IMR-90 (cell line): ENCODE measurements at regions of chr2 and their contacts with region 1.

Region 1: GRCh38 chr2:231674587-231675338 is 33.6 kb upstream of the PTMA start:
- DNase-seq: peak; percentile 43
- ATAC-seq: peak; percentile 75
- H3K4me3 ChIP-seq: no peak overlapping the region
- H3K27ac ChIP-seq: no peak overlapping the region
- H3K4me1 ChIP-seq: peaks cover 18% of the 10 kb centered on the region
- H3K27me3 ChIP-seq: no peaks in the 10 kb centered on the region
- CTCF ChIP-seq: peak; percentile 70
- POLR2A ChIP-seq: no peak
- RAD21 ChIP-seq: peak; percentile 66

Region 2: GRCh38 chr2:231563378-231563961 is 111.3 kb before region 1 on chr2:
- CTCF ChIA-PET with region 1: interaction called, 3 read pairs
- POLR2A ChIA-PET with region 1: no interaction called
- dilution Hi-C with region 1: no loop called
- in situ Hi-C with region 1: no loop called
- intact Hi-C with region 1: loop called (anchors 1 kb)
- DNase-seq: peak; percentile 57
- ATAC-seq: peak; percentile 100
- H3K4me3 ChIP-seq: no peak overlapping the region
- H3K27ac ChIP-seq: no peak overlapping the region
- H3K4me1 ChIP-seq: no peaks in the 10 kb centered on the region
- H3K27me3 ChIP-seq: peaks cover 4% of the 10 kb centered on the region; the same call in 1 of the 2 replicates
- CTCF ChIP-seq: peak; percentile 80
- POLR2A ChIP-seq: no peak
- RAD21 ChIP-seq: peak; percentile 78

Region 3: GRCh38 chr2:231612179-231613053 is 62.3 kb before region 1 on chr2:
- CTCF ChIA-PET with region 1: interaction called, 7 read pairs
- POLR2A ChIA-PET with region 1: interaction called, 3 read pairs
- dilution Hi-C with region 1: no loop called
- in situ Hi-C with region 1: loop called (anchors 5 kb)
- intact Hi-C with region 1: loop called (anchors 1 kb)
- DNase-seq: peak; percentile 96
- ATAC-seq: peak; percentile 76
- H3K4me3 ChIP-seq: no peak overlapping the region
- H3K27ac ChIP-seq: peak overlapping the region; percentile 46
- H3K4me1 ChIP-seq: peaks cover 23% of the 10 kb centered on the region
- H3K27me3 ChIP-seq: no peaks in the 10 kb centered on the region
- CTCF ChIP-seq: peak; percentile 97
- POLR2A ChIP-seq: peak; percentile 67
- RAD21 ChIP-seq: peak; percentile 98

Region 4: DNA sequence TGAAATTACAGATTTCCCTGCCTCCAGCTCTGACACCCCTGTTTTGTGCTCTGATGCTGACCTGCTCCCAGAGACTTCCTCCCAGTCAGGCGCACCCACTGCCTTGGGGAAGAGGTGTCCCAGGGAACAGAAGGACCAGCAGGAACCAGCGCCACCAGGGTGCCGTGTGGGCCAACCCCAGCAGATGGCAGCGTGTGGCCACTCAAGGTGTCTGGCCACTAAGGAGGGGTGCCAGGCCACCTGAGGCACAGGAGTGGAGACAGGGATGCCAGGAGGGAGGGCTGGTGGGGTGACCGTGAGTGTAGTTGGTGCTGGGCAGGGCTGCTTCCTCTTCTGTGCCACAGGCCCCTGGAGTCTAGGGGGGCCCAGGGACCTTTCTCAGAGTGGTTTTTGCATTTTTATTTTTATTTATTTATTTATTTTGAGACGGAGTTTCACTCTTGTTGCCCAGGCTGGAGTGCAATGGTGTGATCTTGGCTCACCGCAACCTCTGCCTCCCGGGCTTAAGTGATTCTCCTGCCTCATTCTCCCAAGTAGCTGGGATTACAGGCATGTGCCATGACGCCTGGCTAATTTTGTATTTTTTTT is 26.1 kb before region 1 on chr2:
- CTCF ChIA-PET with region 1: interaction called, 4 read pairs
- POLR2A ChIA-PET with region 1: no interaction called
- dilution Hi-C with region 1: no loop called
- in situ Hi-C with region 1: no loop called
- intact Hi-C with region 1: loop called (anchors 1 kb)
- DNase-seq: peak; percentile 50
- ATAC-seq: peak; percentile 95
- H3K4me3 ChIP-seq: no peak overlapping the region
- H3K27ac ChIP-seq: no peak overlapping the region
- H3K4me1 ChIP-seq: no peaks in the 10 kb centered on the region
- H3K27me3 ChIP-seq: no peaks in the 10 kb centered on the region
- CTCF ChIP-seq: peak; percentile 71
- POLR2A ChIP-seq: no peak
- RAD21 ChIP-seq: peak; percentile 84

Region 5: DNA sequence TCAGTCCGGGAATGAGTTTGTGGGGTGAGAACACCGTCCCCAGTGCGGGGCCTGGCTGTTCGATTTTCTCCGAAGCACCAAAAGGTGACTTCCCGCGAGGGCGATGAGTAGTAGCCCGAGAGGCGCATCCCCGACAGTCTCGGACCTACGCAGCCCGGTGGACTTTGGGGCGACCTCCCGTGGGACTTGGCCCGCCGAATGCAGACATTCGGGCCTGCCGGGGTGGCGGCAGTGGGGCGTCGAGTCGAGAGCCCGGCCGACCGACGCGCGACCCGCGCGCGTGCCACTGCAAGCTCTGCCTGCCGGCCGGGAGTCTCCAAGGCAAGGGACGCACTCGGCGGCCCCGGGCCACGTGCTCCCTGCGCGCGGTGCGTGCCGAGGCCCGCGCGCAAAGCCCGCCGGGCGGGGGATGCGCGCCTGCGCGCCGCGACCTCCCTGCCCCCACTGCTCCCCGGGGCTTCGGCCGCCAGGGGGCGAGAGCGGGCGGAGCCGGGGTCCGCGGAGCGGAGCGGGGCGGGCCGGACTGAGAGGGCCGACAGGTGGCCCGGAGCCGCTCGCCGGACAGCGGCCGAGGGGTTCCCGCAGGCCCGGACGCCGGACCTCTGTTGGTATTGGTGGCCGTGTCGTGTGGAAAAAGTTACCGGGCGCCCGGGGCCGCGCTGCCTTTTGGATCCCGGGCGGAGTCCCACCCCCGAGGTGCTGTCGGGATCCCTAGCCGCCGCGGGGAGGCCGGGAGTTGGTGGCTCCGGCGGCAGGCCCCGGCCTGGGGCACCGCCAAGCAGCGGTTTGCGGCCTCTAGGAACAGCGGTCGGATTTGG is 35.4 kb after region 1 on chr2:
- CTCF ChIA-PET with region 1: interaction called, 57 read pairs
- POLR2A ChIA-PET with region 1: interaction called, 4 read pairs
- dilution Hi-C with region 1: no loop called
- in situ Hi-C with region 1: loop called (anchors 5 kb)
- intact Hi-C with region 1: loop called (anchors 1 kb)
- DNase-seq: peak; percentile 80
- ATAC-seq: peak; percentile 38
- H3K4me3 ChIP-seq: peak overlapping the region; percentile 89
- H3K27ac ChIP-seq: peak overlapping the region; percentile 86
- H3K4me1 ChIP-seq: peaks cover 12% of the 10 kb centered on the region
- H3K27me3 ChIP-seq: no peaks in the 10 kb centered on the region
- CTCF ChIP-seq: peak; percentile 98
- POLR2A ChIP-seq: peak; percentile 78
- RAD21 ChIP-seq: peak; percentile 40

Region 6: DNA sequence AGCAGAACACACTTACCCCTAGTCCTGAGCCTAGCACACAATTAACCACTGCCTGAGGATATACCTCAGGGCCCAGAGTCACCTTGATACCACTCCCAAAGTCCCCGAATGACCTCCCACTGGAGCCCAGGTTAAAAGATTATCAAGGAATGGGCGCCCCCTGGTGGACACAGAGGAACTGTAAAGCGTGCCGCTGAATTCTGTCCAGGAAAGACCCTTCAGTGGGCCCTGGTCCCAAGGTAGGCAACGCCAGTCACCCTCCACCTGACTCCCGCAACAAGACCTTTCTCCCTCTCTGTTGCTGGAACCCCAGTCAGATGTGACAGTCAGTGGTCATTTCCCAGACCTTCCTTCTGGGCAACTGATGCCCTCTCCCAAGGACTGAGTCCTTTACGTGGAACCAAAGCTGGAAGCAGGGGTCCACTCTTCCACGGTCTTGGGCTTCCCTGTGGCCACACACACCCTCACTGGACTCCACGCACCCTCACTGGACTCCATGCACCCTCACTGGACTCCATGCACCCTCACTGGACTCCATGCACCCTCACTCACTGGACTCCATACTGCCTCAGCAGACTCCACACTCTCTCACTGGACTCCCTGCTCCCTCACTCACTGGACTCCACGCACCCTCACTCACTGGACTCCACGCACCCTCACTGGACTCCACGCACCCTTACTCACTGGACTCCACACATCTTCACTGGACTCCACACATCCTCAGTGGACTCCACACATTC is 40.7 kb after region 1 on chr2:
- CTCF ChIA-PET with region 1: interaction called, 57 read pairs
- POLR2A ChIA-PET with region 1: interaction called, 4 read pairs
- dilution Hi-C with region 1: no loop called
- in situ Hi-C with region 1: loop called (anchors 5 kb)
- intact Hi-C with region 1: loop called (anchors 1 kb)
- DNase-seq: no peak
- ATAC-seq: no peak; the same call in none of the 2 replicates
- H3K4me3 ChIP-seq: no peak overlapping the region
- H3K27ac ChIP-seq: peak overlapping the region; percentile 0; the same call in 1 of the 2 replicates
- H3K4me1 ChIP-seq: peaks cover 26% of the 10 kb centered on the region
- H3K27me3 ChIP-seq: no peaks in the 10 kb centered on the region
- CTCF ChIP-seq: peak; percentile 67
- POLR2A ChIP-seq: no peak
- RAD21 ChIP-seq: peak; percentile 60

Region 7: GRCh38 chr2:231780909-231781797 is 106.4 kb after region 1 on chr2 and contains the start of gene PDE6D:
- CTCF ChIA-PET with region 1: no interaction called
- POLR2A ChIA-PET with region 1: no interaction called
- dilution Hi-C with region 1: no loop called
- in situ Hi-C with region 1: no loop called
- intact Hi-C with region 1: loop called (anchors 10 kb)
- DNase-seq: peak; percentile 99
- ATAC-seq: peak; percentile 97
- H3K4me3 ChIP-seq: peak within 1 kb of the TSS; percentile 60
- H3K27ac ChIP-seq: peak within 1 kb of the TSS; percentile 31
- H3K4me1 ChIP-seq: peaks cover 7% of the 10 kb centered on the region
- H3K27me3 ChIP-seq: no peaks in the 10 kb centered on the region
- CTCF ChIP-seq: no peak
- POLR2A ChIP-seq: peak; percentile 69; the same call in 1 of the 2 replicates
- RAD21 ChIP-seq: no peak
- total RNA-seq, gene PDE6D: 13.6 and 13.8 TPM in 2 replicates